ENCODE measurements at regions of chr2 and their contacts with region 1.

Region 1: GRCh38 chr2:136238286-136239078 is 120.5 kb upstream of the CXCR4 start:
- DNase-seq: peak; percentile 61
- H3K4me3 Mint-ChIP-seq: no peak overlapping the region
- H3K27ac Mint-ChIP-seq: peak overlapping the region; percentile 93
- H3K4me1 Mint-ChIP-seq: peaks cover 64% of the 10 kb centered on the region
- H3K27me3 Mint-ChIP-seq: no peaks in the 10 kb centered on the region

Region 2: GRCh38 chr2:136052369-136053362 is 185.8 kb before region 1 on chr2:
- CTCF ChIA-PET with region 1: no interaction called
- POLR2A ChIA-PET with region 1: interaction called, 6 read pairs
- intact Hi-C with region 1: loop called (anchors 2 kb)
- DNase-seq: peak; percentile 35
- H3K4me3 Mint-ChIP-seq: peak overlapping the region; percentile 57
- H3K27ac Mint-ChIP-seq: peak overlapping the region; percentile 99
- H3K4me1 Mint-ChIP-seq: peaks cover 86% of the 10 kb centered on the region
- H3K27me3 Mint-ChIP-seq: no peaks in the 10 kb centered on the region

Region 3: GRCh38 chr2:136212423-136213378 is 25.8 kb before region 1 on chr2:
- CTCF ChIA-PET with region 1: interaction called, 10 read pairs
- POLR2A ChIA-PET with region 1: interaction called, 4 read pairs
- intact Hi-C with region 1: loop called (anchors 1 kb)
- DNase-seq: peak; percentile 61
- H3K4me3 Mint-ChIP-seq: no peak overlapping the region
- H3K27ac Mint-ChIP-seq: peak overlapping the region; percentile 59
- H3K4me1 Mint-ChIP-seq: peaks cover 46% of the 10 kb centered on the region
- H3K27me3 Mint-ChIP-seq: no peaks in the 10 kb centered on the region

Region 4: DNA sequence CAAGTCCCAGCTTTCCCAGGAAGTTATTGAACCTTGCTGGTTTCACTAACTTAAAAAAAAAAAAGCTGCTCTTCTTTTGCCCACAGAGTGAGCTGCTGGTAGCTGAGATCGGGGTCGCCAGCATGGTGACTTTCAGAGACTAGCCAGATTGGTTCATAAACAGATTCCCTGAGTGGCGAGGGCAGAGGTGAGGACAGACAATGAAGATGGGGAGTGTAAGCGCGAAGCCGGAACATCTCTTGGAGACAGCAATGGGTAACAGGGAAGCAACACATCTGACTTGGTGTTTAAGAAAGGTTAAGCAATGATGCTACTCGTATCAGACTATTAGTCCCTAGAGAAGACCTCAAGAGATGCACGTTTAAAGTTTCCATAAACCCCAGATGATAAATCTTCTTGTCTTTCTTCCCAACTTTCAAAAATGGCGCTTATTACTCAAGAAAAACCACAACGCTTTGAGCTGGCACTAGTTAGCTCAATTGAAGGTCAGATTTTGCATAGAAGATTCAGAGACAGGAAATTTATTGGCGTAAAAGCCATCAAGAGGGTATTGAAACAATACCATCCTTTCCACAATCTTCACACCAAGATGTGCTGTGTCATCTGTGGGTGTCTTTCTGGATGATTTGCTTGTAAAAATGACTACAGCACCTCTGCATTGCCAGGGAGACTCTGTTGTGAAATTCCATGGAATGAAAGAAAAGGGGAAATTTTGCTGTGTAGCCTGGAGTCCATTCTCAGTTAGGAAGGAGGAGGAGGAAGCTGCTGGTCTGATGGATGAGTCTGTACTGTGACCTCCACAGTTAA is 72.5 kb after region 1 on chr2:
- CTCF ChIA-PET with region 1: interaction called, 3 read pairs
- POLR2A ChIA-PET with region 1: interaction called, 4 read pairs
- intact Hi-C with region 1: loop called (anchors 1 kb)
- DNase-seq: peak; percentile 51
- H3K4me3 Mint-ChIP-seq: no peak overlapping the region
- H3K27ac Mint-ChIP-seq: peak overlapping the region; percentile 92
- H3K4me1 Mint-ChIP-seq: peaks cover 34% of the 10 kb centered on the region
- H3K27me3 Mint-ChIP-seq: no peaks in the 10 kb centered on the region

Region 5: GRCh38 chr2:136378712-136379595 is 140.5 kb after region 1 on chr2:
- CTCF ChIA-PET with region 1: interaction called, 26 read pairs
- POLR2A ChIA-PET with region 1: interaction called, 18 read pairs
- intact Hi-C with region 1: loop called (anchors 1 kb)
- DNase-seq: peak; percentile 88
- H3K4me3 Mint-ChIP-seq: no peak overlapping the region
- H3K27ac Mint-ChIP-seq: peak overlapping the region; percentile 44
- H3K4me1 Mint-ChIP-seq: peaks cover 87% of the 10 kb centered on the region
- H3K27me3 Mint-ChIP-seq: no peaks in the 10 kb centered on the region

Measured in activated CD4-positive, alpha-beta memory T cell treated with anti-CD3 and anti-CD28 coated beads for 36 hours (primary cell).